ENCODE measurements at regions of chr1 and their contacts with region 1.

Region 1: GRCh38 chr1:147084273-147085096 is 87.8 kb downstream of the PRKAB2 start:
- DNase-seq: peak; percentile 85
- ATAC-seq: peak; percentile 90
- H3K4me3 ChIP-seq: peak overlapping the region; percentile 61
- H3K27ac ChIP-seq: peak overlapping the region; percentile 84; the same call in 1 of the 2 replicates
- H3K4me1 ChIP-seq: no peaks in the 10 kb centered on the region
- H3K27me3 ChIP-seq: peaks cover 33% of the 10 kb centered on the region
- CTCF ChIP-seq: no peak
- POLR2A ChIP-seq: peak; percentile 99
- RAD21 ChIP-seq: no peak

Region 2: DNA sequence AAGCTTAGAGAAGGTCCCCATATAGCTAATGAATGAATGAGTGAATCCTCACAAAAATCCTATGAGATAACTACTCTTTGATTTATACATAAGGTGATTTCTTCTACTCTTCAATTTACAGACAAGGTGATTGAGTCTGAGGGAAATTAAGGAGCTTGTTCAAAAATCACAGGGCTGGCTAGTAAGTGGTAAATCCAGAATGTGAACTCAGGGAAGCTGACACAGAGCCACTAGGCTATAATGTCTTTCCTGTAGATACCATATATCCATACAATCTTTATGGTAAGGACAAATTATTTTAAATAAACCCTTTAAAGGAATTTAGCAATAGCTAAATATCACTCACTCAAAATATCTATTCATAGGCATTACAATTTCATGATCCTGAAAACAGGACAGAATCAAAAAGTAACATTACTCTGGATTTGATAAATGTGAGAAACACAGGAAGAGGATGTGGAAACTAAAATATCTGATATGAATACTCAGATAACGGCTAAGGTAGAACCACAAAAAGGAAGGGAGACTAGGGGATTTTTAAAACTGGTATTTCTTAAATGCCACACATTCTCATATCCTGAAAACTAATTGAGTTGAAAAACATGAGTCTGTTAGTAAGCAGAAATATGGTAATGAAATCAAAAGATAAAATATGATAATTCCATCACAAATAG is 38.2 kb before region 1 on chr1:
- CTCF ChIA-PET with region 1: no interaction called
- POLR2A ChIA-PET with region 1: no interaction called
- dilution Hi-C with region 1: no loop called
- in situ Hi-C with region 1: no loop called
- intact Hi-C with region 1: no loop called
- DNase-seq: peak; percentile 0
- ATAC-seq: no peak
- H3K4me3 ChIP-seq: no peak overlapping the region
- H3K27ac ChIP-seq: no peak overlapping the region
- H3K4me1 ChIP-seq: no peaks in the 10 kb centered on the region
- H3K27me3 ChIP-seq: no peaks in the 10 kb centered on the region
- CTCF ChIP-seq: no peak
- POLR2A ChIP-seq: no peak
- RAD21 ChIP-seq: no peak

Region 3: GRCh38 chr1:147105909-147106308 is 21.4 kb after region 1 on chr1:
- CTCF ChIA-PET with region 1: no interaction called
- POLR2A ChIA-PET with region 1: no interaction called
- dilution Hi-C with region 1: no loop called
- in situ Hi-C with region 1: no loop called
- intact Hi-C with region 1: loop called (anchors 2 kb)
- DNase-seq: no peak
- ATAC-seq: no peak
- H3K4me3 ChIP-seq: no peak overlapping the region
- H3K27ac ChIP-seq: no peak overlapping the region
- H3K4me1 ChIP-seq: no peaks in the 10 kb centered on the region
- H3K27me3 ChIP-seq: peaks cover 7% of the 10 kb centered on the region
- CTCF ChIP-seq: no peak
- POLR2A ChIP-seq: no peak
- RAD21 ChIP-seq: no peak

Region 4: DNA sequence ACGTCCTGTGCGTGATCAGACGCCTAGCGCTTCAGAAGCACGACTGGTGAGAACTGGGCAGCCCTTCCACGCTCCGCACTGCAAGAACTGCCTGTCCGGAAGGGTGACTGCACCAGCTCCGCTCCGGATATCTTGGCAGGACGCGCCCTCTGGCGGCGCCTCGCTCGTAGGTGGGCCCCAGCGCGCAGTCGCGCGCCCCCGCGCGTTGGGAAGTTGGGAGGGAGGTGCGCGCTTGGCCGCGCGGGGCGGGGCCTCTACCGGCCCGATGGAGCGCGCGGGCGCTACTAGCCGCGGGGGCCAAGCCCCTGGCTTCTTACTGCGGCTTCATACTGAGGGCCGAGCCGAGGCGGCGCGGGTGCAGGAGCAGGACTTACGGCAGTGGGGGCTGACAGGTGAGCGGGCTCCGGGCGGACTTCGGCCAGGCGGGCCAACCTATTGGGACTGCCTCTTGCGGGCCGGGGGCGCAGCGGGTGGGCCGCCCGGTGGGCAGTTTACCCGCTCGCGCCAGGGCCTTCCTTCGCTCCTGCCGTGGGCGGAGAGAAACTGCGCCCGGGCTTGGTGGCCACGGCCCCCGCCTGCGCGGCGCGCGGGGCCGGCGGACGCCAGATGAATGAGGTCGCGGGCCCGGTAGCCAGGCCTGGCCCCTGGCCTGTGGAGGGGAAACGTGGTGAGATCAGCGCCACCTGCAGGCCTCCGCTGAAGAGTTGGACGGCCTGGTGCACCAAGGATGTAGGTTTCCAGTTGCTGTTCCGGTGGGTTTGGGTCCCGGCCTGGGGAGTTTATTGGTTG is 158.1 kb after region 1 on chr1 and contains the start of gene CHD1L:
- CTCF ChIA-PET with region 1: no interaction called
- POLR2A ChIA-PET with region 1: interaction called, 9 read pairs
- dilution Hi-C with region 1: no loop called
- in situ Hi-C with region 1: no loop called
- intact Hi-C with region 1: loop called (anchors 1 kb)
- DNase-seq: peak; percentile 95
- ATAC-seq: peak; percentile 94
- H3K4me3 ChIP-seq: peak within 1 kb of the TSS; percentile 70
- H3K27ac ChIP-seq: peak within 1 kb of the TSS; percentile 70
- H3K4me1 ChIP-seq: peaks cover 7% of the 10 kb centered on the region
- H3K27me3 ChIP-seq: no peaks in the 10 kb centered on the region
- CTCF ChIP-seq: peak; percentile 98
- POLR2A ChIP-seq: peak; percentile 76
- RAD21 ChIP-seq: peak; percentile 93
- total RNA-seq, gene CHD1L: 47.5 and 51.7 TPM in 2 replicates

Measured in IMR-90 (cell line).